ENCODE measurements at regions of chr13 and their contacts with region 1.

Region 1: GRCh38 chr13:29140277-29140676 is 320.1 kb downstream of the MTUS2 start:
- DNase-seq: no peak
- H3K4me3 ChIP-seq: no peak overlapping the region
- H3K27ac ChIP-seq: no peak overlapping the region
- H3K4me1 ChIP-seq: no peaks in the 10 kb centered on the region
- H3K27me3 ChIP-seq: no peaks in the 10 kb centered on the region
- CTCF ChIP-seq: no peak

Region 2: DNA sequence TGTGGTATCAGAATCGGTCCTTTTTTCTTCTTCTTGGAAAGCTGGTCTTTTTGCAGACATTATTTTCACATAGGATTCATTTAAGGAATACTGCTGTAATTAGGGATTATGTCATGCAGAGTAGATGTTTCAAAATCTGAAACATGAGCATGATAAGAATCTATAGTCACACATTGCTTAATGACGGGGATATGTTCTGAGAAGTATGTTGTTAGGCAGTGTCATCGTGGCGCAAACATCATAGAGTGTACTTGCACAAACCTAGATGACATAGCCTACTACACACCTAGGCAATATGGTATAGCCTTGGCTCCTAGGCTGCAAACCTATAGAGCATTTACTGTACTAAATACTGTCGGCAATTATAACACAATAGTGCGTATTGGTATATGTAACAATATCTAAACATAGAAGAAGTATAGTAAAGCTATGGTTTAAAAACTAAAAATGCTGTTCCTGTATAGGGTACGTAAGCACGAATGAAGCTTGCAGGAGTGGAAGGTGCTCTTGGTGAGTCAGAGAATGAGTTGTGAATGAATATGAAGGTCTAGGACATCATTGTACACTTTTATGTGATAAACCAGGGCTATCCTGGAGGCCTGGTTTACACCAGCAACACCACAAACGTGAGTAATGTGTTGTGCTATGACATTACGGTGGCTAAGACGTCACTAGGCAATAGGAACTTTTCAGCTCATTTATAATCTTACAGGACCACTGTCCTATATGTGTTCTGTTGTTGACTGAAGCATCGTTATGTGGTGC is 37.1 kb before region 1 on chr13:
- CTCF ChIA-PET with region 1: no interaction called
- dilution Hi-C with region 1: loop called (anchors 5 kb)
- in situ Hi-C with region 1: no loop called
- intact Hi-C with region 1: no loop called
- DNase-seq: no peak
- H3K4me3 ChIP-seq: no peak overlapping the region
- H3K27ac ChIP-seq: no peak overlapping the region
- H3K4me1 ChIP-seq: no peaks in the 10 kb centered on the region
- H3K27me3 ChIP-seq: no peaks in the 10 kb centered on the region
- CTCF ChIP-seq: no peak

Region 3: GRCh38 chr13:29170436-29171082 is 30.3 kb after region 1 on chr13:
- CTCF ChIA-PET with region 1: no interaction called
- dilution Hi-C with region 1: no loop called
- in situ Hi-C with region 1: no loop called
- intact Hi-C with region 1: no loop called
- DNase-seq: no peak
- H3K4me3 ChIP-seq: no peak overlapping the region
- H3K27ac ChIP-seq: no peak overlapping the region
- H3K4me1 ChIP-seq: no peaks in the 10 kb centered on the region
- H3K27me3 ChIP-seq: no peaks in the 10 kb centered on the region
- CTCF ChIP-seq: no peak

Region 4: GRCh38 chr13:29204651-29205050 is 64.4 kb after region 1 on chr13:
- CTCF ChIA-PET with region 1: no interaction called
- dilution Hi-C with region 1: no loop called
- in situ Hi-C with region 1: loop called in 1 of 2 experiments (anchors 10 kb)
- intact Hi-C with region 1: no loop called
- DNase-seq: no peak
- H3K4me3 ChIP-seq: no peak overlapping the region
- H3K27ac ChIP-seq: no peak overlapping the region
- H3K4me1 ChIP-seq: no peaks in the 10 kb centered on the region
- H3K27me3 ChIP-seq: no peaks in the 10 kb centered on the region
- CTCF ChIP-seq: no peak

Measured in mammary epithelial cell (primary cell).